ENCODE measurements at regions of chr1 and their contacts with region 1.

Region 1: GRCh38 chr1:200620273-200621131 is at the start of gene KIF14:
- DNase-seq: peak; percentile 96
- ATAC-seq: peak; percentile 93
- H3K4me3 Mint-ChIP-seq: peak within 1 kb of the TSS; percentile 84
- H3K27ac Mint-ChIP-seq: peak within 1 kb of the TSS; percentile 88
- H3K4me1 Mint-ChIP-seq: peaks cover 24% of the 10 kb centered on the region
- H3K27me3 Mint-ChIP-seq: no peaks in the 10 kb centered on the region
- total RNA-seq, gene KIF14: 14.8 to 14.9 TPM

Region 2: GRCh38 chr1:200336111-200336845 is 284.2 kb before region 1 on chr1:
- CTCF ChIA-PET with region 1: no interaction called
- POLR2A ChIA-PET with region 1: no interaction called
- intact Hi-C with region 1: no loop called
- DNase-seq: no peak
- ATAC-seq: no peak
- H3K4me3 Mint-ChIP-seq: no peak overlapping the region
- H3K27ac Mint-ChIP-seq: no peak overlapping the region
- H3K4me1 Mint-ChIP-seq: peaks cover 23% of the 10 kb centered on the region
- H3K27me3 Mint-ChIP-seq: no peaks in the 10 kb centered on the region

Region 3: GRCh38 chr1:200409761-200410565 is 210.5 kb before region 1 on chr1 and contains the start of gene ZNF281:
- CTCF ChIA-PET with region 1: no interaction called
- POLR2A ChIA-PET with region 1: no interaction called
- intact Hi-C with region 1: loop called in 1 of 2 experiments (anchors 1 kb)
- DNase-seq: peak; percentile 97
- ATAC-seq: peak; percentile 99
- H3K4me3 Mint-ChIP-seq: peak within 1 kb of the TSS; percentile 80
- H3K27ac Mint-ChIP-seq: peak within 1 kb of the TSS; percentile 93
- H3K4me1 Mint-ChIP-seq: peaks cover 49% of the 10 kb centered on the region
- H3K27me3 Mint-ChIP-seq: no peaks in the 10 kb centered on the region
- total RNA-seq, gene ZNF281: 10.8 to 13.5 TPM

Region 4: DNA sequence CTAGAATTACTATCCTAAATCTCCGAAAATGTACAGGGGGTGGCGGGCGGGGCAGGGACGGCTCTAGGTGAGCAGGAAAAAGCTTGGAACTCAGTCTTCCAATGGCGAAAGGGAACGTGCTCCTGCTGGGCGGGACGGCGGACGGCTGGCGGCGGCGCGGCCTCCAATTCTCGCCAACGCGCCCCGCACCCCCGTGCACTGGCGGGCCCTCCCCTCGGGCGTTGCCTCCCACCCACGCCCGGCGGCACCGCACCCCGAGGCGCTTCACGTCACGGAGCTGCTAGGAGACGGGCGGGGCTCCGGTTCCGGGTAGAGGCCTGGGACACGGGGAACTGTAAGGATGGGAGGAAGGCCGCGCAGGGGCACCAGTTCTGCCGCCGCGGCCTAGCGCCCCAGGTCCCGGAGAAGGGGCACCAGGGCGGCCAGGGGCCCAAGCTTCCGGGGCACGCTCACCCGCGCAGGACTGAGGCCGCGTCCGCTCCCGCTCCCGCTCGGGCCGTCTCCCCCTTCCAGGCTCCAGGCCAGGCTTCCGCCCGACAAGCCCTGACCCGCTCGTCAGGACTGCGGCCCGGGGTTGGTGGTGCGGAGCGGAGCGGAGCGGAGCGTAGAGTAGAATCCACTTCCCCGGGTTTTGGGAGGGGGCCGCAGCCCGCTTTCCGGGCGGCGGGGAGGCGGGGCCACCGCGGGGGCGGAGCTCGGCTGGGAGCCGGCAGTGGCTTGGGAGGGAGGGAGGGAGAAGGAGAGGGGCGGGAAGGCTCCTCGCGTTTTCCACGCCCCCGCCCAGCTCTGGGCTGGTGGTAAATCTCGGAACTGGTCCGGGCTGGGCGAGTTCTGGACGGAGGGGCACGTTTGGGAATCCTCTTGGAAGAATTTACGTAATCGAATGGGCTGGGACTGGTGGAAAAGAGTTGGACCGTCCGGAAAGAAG is 49.1 kb after region 1 on chr1 and contains the start of gene DDX59:
- CTCF ChIA-PET with region 1: interaction called, 32 read pairs
- POLR2A ChIA-PET with region 1: interaction called, 15 read pairs
- intact Hi-C with region 1: loop called (anchors 1 kb)
- DNase-seq: peak; percentile 96
- ATAC-seq: peak; percentile 87
- H3K4me3 Mint-ChIP-seq: peak within 1 kb of the TSS; percentile 94
- H3K27ac Mint-ChIP-seq: peak within 1 kb of the TSS; percentile 99
- H3K4me1 Mint-ChIP-seq: peaks cover 40% of the 10 kb centered on the region
- H3K27me3 Mint-ChIP-seq: no peaks in the 10 kb centered on the region
- total RNA-seq, gene DDX59: 17.4 to 19.4 TPM

Region 5: DNA sequence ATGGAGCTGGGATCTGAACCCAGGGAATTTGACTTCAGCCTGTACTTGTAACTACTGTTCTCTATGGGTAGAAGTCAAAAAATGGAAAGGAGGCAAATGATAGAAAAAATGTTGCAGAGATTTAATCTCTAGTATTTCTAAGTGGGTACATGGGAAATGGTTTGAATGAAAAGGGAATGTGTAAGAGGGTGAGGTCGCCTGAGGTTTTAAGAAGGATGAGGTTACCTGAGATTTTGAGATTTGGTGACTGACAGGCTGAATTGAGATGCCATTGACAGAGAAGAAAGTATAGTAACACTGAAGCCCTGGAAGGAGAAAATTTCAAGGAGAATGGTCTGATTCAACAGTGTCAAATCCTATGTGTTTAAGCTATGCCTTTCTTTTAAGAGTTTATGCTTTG is 123.6 kb after region 1 on chr1:
- CTCF ChIA-PET with region 1: interaction called, 10 read pairs
- POLR2A ChIA-PET with region 1: no interaction called
- intact Hi-C with region 1: loop called (anchors 2 kb)
- DNase-seq: no peak
- ATAC-seq: no peak
- H3K4me3 Mint-ChIP-seq: no peak overlapping the region
- H3K27ac Mint-ChIP-seq: no peak overlapping the region
- H3K4me1 Mint-ChIP-seq: peaks cover 36% of the 10 kb centered on the region
- H3K27me3 Mint-ChIP-seq: peaks cover 4% of the 10 kb centered on the region

Region 6: GRCh38 chr1:200808846-200809245 is 188.3 kb after region 1 on chr1:
- CTCF ChIA-PET with region 1: interaction called, 90 read pairs
- POLR2A ChIA-PET with region 1: no interaction called
- intact Hi-C with region 1: no loop called
- DNase-seq: no peak
- ATAC-seq: no peak
- H3K4me3 Mint-ChIP-seq: no peak overlapping the region
- H3K27ac Mint-ChIP-seq: no peak overlapping the region
- H3K4me1 Mint-ChIP-seq: no peaks in the 10 kb centered on the region
- H3K27me3 Mint-ChIP-seq: no peaks in the 10 kb centered on the region

Region 7: DNA sequence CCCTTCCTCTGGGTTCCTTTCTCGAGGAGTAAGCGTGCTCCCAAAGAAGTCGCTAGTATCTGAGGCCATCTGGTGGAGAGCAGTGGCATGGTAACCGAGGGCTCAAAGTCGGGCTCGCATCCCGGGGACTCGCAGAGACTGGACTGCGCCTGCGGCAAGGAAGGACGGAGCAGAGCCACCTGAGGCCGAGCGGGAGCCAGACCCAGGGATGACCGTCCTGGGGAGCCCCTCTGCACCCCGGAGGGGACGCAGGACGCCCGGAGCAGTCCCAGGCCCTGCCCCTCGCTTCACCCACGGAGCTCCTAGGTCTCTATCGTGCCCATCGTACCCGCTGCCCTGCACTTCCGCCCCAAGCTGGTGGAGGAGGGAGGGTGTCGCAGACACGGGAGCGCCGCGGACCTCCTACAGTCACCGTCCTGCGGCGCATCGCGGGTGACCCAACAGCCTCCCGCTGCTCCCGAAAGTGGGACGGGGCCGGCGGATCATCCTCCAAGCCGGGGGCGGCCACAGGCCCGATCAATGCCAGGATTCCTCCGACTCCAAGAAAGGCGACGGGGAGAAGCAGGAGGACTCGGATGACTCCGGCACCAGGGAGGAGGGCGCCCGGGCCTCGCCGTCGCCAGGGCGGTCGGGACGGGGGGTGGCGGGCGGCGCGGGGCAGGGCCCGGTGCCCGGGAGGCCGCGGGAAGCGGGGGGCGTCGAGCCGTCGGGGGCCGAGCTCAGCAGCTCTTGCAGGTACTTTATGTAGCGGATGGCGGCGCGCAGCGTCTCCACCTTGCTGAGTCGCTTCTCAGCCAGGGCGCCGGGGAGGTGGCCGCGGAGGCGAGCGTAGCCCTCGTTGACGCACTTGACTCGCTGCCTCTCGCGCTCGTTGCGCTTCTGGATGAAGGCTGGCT is 494.0 kb after region 1 on chr1:
- CTCF ChIA-PET with region 1: interaction called, 4 read pairs
- POLR2A ChIA-PET with region 1: interaction called, 9 read pairs
- intact Hi-C with region 1: loop called in 1 of 2 experiments (anchors 1 kb)
- DNase-seq: peak; percentile 88
- ATAC-seq: peak; percentile 94
- H3K4me3 Mint-ChIP-seq: peak overlapping the region; percentile 78
- H3K27ac Mint-ChIP-seq: peak overlapping the region; percentile 83
- H3K4me1 Mint-ChIP-seq: peaks cover 2% of the 10 kb centered on the region
- H3K27me3 Mint-ChIP-seq: no peaks in the 10 kb centered on the region

Measured in activated CD4-positive, alpha-beta T cell treated with anti-CD3 and anti-CD28 coated beads for 36 hours (primary cell).